AG04450 (cell line): ENCODE measurements at regions of chr19 and their contacts with region 1.

Region 1: GRCh38 chr19:12092065-12092867 is 27.7 kb downstream of the ZNF844 start:
- DNase-seq: peak; percentile 64
- H3K4me3 ChIP-seq: peak overlapping the region; percentile 81
- H3K27ac ChIP-seq: peak overlapping the region; percentile 75
- H3K27me3 ChIP-seq: no peaks in the 10 kb centered on the region
- CTCF ChIP-seq: no peak

Region 2: GRCh38 chr19:12139885-12140547 is 47.8 kb after region 1 on chr19 and contains the start of gene ZNF20:
- CTCF ChIA-PET with region 1: interaction called, 26 read pairs
- POLR2A ChIA-PET with region 1: no interaction called
- DNase-seq: peak; percentile 78
- H3K4me3 ChIP-seq: peak within 1 kb of the TSS; percentile 75
- H3K27ac ChIP-seq: peak within 1 kb of the TSS; percentile 66
- H3K27me3 ChIP-seq: no peaks in the 10 kb centered on the region
- CTCF ChIP-seq: no peak
- polyA plus RNA-seq, gene ZNF20: 2.4 and 2.7 TPM in 2 replicates